ENCODE measurements at regions of chr2 and their contacts with region 1.

Region 1: DNA sequence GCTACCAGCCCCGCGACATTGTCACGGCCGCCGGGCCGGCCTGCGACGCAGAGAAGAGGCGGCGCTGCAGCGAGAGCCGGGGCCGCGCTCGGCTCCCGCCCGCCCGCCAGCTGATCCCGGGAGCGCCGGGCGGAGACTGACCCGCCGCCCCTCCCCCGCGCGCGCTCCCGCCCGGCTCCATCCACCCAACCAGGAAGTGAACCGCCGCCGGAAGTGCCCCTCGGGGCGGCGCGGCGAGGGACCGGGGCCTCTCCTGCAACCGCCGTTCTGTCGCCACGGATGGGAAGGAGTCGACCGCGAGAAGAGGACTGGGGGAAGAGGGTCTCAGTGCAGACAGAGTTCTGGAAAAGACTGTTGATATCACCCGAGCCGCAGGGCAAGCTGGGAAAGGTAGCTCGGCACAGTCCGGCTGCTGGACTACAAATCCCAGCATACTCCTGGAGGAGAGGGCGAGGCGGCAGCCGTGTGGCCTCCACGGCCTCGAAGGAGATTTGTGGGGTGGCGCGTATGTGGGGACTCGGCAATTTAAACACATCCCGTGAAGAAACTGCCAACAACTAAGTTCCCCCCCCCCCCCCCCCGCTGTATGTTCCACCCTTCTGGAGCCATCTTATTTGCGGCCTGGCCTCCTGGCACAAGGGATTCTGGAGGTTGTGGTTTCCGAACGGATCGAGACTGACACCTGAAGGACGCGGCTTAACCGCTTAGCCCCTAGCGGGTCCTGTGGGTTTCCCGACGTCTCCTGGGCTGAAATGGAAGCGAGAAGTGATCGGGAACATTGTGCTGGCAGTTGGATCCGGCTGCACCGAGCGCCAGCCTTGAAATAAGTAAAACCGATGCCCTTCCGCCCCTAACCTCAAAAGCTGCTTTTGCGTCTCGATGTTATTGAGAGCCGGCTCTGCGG is at the start of gene AAK1:
- DNase-seq: peak; percentile 70 to 90 (median 83)
- ATAC-seq: peak; percentile 41 to 50
- H3K4me3 Mint-ChIP-seq: peak within 1 kb of the TSS; percentile 89 to 99 (median 96)
- H3K27ac Mint-ChIP-seq: peak within 1 kb of the TSS; percentile 94 to 99 (median 97)
- H3K4me1 Mint-ChIP-seq: peaks cover 38 to 73% (median 63%) of the 10 kb centered on the region in 4 donors
- H3K27me3 Mint-ChIP-seq: no peaks in the 10 kb centered on the region
- polyA plus RNA-seq, gene AAK1: 59.8 to 106 (median 97.3) TPM

Region 2: DNA sequence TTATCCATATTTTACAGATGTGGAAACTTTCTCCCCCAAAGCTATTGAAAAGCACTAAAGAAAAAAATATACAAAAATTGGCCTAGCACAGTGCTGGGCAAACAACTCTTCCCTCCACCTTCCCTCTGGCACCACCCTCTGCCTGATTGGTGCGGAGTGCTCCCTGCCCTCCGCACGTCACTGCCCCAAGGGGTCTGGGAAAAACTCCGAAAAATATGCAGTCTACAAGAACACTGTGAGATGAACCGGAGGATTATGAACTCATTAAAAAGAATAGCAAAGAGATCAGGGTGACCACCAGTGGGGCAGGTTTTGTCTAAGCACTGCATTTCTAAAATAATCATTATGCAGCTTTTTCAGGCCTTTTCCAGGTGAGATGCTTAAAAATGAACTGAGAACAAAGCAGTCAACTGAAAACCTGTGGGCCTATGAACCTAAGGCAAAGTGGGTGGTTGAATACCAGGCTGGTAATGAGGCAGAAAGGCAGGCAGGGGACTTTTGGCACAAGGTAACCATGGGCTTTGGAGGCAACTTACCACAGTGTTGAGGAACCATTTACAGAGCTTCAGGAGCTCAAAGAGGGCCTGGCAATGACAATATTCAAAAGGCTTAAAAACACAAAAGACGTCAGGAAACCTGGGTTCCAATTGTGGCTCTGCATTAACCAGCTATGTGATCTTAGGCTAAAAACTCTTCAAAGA is 57.8 kb before region 1 on chr2:
- POLR2A ChIA-PET with region 1: interaction called, 10 read pairs
- DNase-seq: peak in 1 of 10 donors; percentile 32
- ATAC-seq: peak in 1 of 2 donors; percentile 50
- H3K4me3 Mint-ChIP-seq: peak overlapping the region in 8 of 10 donors; percentile 4 to 44 (median 21)
- H3K27ac Mint-ChIP-seq: peak overlapping the region; percentile 23 to 86 (median 70)
- H3K4me1 Mint-ChIP-seq: peaks cover 52 to 94% (median 86%) of the 10 kb centered on the region in 4 donors
- H3K27me3 Mint-ChIP-seq: no peaks in the 10 kb centered on the region

Region 3: DNA sequence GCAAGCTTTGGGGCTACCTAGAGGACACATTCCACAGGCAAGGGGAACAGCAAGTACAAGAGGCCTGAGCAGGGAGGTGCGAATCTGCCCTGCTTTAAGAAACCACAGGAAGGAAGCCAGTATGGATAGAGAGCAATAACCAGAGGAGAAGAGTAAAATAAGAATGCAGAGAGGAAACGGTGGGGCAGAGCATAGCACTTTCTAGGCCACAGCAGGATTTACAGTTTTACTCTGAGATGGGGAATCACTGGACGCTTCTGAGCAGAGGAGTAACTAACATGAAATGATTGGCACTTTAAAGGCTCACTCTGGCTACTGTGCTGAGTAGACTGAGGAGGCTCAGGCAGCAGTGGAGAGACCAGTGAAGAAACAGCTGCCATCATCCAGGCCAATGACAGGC is 24.1 kb before region 1 on chr2:
- POLR2A ChIA-PET with region 1: interaction called, 39 read pairs
- DNase-seq: peak in 1 of 10 donors; percentile 22
- ATAC-seq: peak; percentile 35 to 49
- H3K4me3 Mint-ChIP-seq: no peak overlapping the region
- H3K27ac Mint-ChIP-seq: no peak overlapping the region
- H3K4me1 Mint-ChIP-seq: peaks cover 14 to 34% (median 28%) of the 10 kb centered on the region in 4 donors
- H3K27me3 Mint-ChIP-seq: no peaks in the 10 kb centered on the region

Region 4: DNA sequence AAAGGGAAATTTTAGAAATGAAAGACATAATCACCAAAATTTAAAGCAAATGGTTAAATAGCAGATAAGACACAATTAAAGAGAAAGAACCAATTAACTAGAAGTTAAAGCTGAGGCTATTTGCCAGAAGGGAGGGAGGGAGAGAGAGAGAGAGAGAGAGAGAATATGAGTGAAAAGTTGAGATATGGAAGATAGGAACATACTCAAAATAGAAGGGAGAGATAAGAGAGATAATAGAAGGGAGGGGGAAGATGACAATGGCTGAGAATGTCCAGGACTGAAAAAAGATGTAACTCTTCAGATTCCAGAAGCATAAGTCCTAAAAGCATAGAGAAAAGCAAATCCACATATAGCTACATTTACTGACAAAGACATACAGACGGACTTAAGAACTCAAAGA is 16.8 kb after region 1 on chr2:
- POLR2A ChIA-PET with region 1: interaction called, 17 read pairs
- DNase-seq: no peak
- ATAC-seq: no peak
- H3K4me3 Mint-ChIP-seq: no peak overlapping the region
- H3K27ac Mint-ChIP-seq: peak overlapping the region in 5 of 10 donors; percentile 10 to 58 (median 33)
- H3K4me1 Mint-ChIP-seq: peaks cover 11 to 23% (median 22%) of the 10 kb centered on the region in 4 donors
- H3K27me3 Mint-ChIP-seq: no peaks in the 10 kb centered on the region

Region 5: DNA sequence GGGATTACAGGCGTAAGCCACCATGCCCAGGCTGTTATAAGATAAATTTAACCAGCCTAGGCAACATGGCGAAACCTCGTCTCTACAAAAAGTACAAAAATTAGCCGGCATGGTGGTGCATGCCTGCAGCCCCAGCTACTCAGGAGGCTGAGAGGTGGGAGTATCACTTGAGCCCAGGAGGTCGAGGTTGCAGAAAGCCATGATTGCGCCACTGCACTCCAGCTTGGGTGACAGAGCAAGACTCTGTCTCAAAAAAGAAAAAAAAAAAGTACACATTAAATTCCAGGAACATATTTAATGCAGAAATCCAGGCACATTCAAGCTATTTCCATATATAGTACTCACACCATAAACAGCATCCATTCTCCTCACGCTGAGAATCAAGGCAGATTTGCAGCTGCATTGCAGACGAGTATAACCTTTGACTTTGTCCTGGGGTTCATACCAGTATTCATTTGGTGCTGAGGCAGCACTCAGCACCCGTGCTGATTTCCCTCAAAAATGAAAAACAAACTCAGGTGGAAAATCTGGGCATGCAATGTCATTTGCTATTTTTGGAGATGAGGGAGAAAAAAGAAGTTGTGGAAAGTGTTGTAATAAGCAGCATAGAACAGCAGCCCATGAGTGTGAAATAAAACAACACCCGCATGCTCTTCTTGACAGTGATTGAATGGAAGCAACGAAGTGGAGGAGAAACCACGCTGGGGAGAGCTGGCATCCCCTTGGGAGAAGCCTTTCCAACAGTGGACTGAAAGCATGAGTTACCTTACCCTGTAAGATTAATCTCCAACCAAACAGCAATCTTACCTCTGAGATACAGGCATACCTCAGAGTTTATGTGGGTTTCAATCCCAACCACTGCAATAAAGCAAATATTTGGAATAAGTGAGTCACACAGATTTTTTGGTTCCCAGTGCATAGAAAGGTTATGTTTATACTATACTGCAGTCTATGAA is 51.3 kb after region 1 on chr2:
- POLR2A ChIA-PET with region 1: interaction called, 214 read pairs
- DNase-seq: no peak
- ATAC-seq: no peak
- H3K4me3 Mint-ChIP-seq: peak overlapping the region in 9 of 10 donors; percentile 39 to 72 (median 55)
- H3K27ac Mint-ChIP-seq: peak overlapping the region; percentile 71 to 98 (median 88)
- H3K4me1 Mint-ChIP-seq: peaks cover 54 to 95% (median 92%) of the 10 kb centered on the region in 4 donors
- H3K27me3 Mint-ChIP-seq: no peaks in the 10 kb centered on the region

Region 6: DNA sequence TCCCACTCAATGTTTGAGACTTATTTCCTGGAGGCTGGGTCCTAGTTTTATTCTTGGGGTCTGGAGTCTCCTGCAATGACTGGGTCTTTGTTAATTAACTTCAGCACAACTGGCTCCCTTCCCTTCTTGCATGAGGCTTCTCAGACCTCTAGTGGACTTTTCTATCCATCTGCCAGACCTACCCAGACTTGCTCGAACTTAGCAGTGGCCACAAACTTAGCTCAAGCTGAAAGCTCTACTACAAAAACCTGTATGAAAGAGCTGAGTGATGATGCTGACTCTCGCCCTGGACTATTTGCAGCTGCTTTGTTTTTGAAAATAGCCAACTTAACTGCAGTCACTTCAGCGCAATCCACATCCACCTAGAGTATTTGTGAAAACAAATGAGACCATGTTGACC is 87.3 kb after region 1 on chr2:
- POLR2A ChIA-PET with region 1: no interaction called
- DNase-seq: no peak
- ATAC-seq: no peak
- H3K4me3 Mint-ChIP-seq: no peak overlapping the region
- H3K27ac Mint-ChIP-seq: no peak overlapping the region
- H3K4me1 Mint-ChIP-seq: peaks cover 0 to 19% (median 0%) of the 10 kb centered on the region in 4 donors
- H3K27me3 Mint-ChIP-seq: no peaks in the 10 kb centered on the region

Region 7: GRCh38 chr2:70086838-70087701 is 443.2 kb after region 1 on chr2 and contains the start of gene PCBP1:
- POLR2A ChIA-PET with region 1: interaction called, 13 read pairs
- DNase-seq: peak; percentile 89 to 99 (median 98)
- ATAC-seq: peak; percentile 36 to 61
- H3K4me3 Mint-ChIP-seq: peak within 1 kb of the TSS; percentile 93 to 99 (median 97)
- H3K27ac Mint-ChIP-seq: peak within 1 kb of the TSS; percentile 100
- H3K4me1 Mint-ChIP-seq: peaks cover 35 to 71% (median 65%) of the 10 kb centered on the region in 4 donors
- H3K27me3 Mint-ChIP-seq: peaks cover 0 to 4% (median 0%) of the 10 kb centered on the region in 5 donors
- polyA plus RNA-seq, gene PCBP1: 159 to 218 (median 195) TPM